ENCODE measurements at regions of chr14 and their contacts with region 1.

Region 1: DNA sequence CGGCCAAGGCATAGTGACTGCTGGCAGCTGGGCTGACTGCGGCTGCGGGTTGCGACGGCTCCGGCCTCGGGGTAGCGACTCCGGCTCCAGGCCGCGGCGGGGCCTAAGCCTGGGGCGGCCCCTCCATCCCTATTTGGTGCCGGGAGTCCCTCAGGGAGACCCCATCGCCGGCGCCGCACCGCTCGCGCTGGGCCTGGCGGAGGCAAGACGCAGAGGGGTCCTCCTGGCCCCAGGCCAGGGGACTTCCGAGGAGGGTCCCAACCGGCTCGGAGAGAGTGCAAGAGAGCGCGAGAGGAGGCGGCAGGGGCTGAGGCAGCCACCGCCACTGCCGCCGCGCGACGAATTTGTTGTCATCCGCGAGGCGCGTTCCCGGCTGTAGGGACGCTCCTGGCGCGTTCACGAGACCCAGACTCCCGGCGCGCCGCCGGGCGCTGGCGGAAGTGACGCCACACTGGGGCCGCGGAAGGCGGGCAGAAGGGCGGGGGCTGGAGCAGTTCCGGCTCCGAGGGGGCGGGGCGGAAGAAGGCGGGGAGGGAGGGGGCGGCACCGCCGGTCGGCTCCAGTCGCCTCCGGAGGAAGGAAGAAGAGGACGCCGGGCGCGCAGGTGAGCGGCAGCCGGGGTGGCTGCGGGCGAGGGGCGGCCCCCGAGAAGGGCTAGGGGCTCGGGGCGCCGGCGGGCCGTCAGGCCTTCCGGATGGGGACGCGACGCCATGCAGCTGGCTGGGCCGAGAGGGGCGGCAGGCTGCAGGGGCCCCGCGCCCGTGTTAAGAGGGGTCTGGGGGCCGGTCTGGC is at the starts of genes ATG2B and GSKIP:
- DNase-seq: peak; percentile 97
- ATAC-seq: peak; percentile 80
- H3K4me3 ChIP-seq: peak within 1 kb of the TSS; percentile 75 to 97 (median 91)
- H3K4me3 Mint-ChIP-seq: peak within 1 kb of the TSS; percentile 89
- H3K27ac ChIP-seq: peak within 1 kb of the TSS; percentile 77 to 98
- H3K27ac Mint-ChIP-seq: peak within 1 kb of the TSS; percentile 91
- H3K4me1 ChIP-seq: peaks cover 25 to 28% of the 10 kb centered on the region in 2 donors
- H3K4me1 Mint-ChIP-seq: peaks cover 44% of the 10 kb centered on the region
- H3K27me3 ChIP-seq: no peaks in the 10 kb centered on the region
- H3K27me3 Mint-ChIP-seq: no peaks in the 10 kb centered on the region
- CTCF ChIP-seq: no peak
- total RNA-seq, gene ATG2B: 37.5 and 39.6 TPM in 2 replicates
- total RNA-seq, gene GSKIP: 14.9 and 15.8 TPM in 2 replicates

Region 2: DNA sequence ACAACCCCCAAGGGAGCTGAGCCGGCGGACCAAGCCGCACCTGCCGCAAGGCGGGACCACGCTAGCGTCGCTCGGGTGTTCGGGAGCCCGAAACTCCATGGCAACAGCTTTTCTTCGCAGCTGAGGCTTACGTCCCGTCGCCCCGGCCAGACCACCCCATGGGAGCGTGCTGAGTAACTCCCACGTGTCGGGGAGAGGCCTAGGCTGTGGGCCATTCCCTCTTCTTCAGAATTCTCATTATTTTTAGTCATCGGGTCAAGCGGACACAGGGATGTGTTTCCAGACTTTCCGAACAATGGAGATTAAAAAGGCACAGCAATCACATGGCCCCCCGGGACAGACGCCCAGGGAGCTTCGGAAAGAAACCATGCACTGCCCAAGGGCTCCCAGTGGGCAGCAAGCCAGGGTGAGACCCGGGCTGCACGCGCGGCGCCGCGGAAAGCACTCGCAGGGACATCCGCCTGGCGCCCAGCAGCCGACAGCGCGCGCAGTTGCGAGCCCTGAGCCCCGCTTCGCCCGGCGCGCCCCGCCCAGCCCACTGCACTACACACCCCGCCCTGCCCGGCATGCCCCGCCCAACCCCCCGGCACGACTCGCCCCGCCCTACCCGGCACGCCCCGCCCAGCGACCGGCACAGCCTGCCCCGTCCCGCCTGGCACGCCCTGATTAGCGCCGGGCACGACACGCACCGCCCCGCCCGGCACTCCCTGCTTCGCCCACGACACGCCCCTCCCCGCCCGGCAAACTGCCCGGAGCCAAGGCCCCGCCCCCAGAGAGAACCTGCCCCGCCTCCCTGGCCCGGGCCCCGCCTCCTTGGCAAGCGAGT is 28.3 kb after region 1 on chr14:
- CTCF ChIA-PET with region 1: no interaction called
- POLR2A ChIA-PET with region 1: no interaction called
- intact Hi-C with region 1: loop called (anchors 1 kb)
- DNase-seq: peak; percentile 98
- ATAC-seq: peak; percentile 94
- H3K4me3 ChIP-seq: peak overlapping the region; percentile 68 to 96 (median 77)
- H3K4me3 Mint-ChIP-seq: peak overlapping the region; percentile 93
- H3K27ac ChIP-seq: peak overlapping the region; percentile 45 to 74
- H3K27ac Mint-ChIP-seq: peak overlapping the region; percentile 79
- H3K4me1 ChIP-seq: peaks cover 7 to 18% of the 10 kb centered on the region in 2 donors
- H3K4me1 Mint-ChIP-seq: peaks cover 8% of the 10 kb centered on the region
- H3K27me3 ChIP-seq: no peaks in the 10 kb centered on the region
- H3K27me3 Mint-ChIP-seq: peaks cover 5% of the 10 kb centered on the region
- CTCF ChIP-seq: no peak